ENCODE measurements at regions of chr10 and their contacts with region 1.

Region 1: DNA sequence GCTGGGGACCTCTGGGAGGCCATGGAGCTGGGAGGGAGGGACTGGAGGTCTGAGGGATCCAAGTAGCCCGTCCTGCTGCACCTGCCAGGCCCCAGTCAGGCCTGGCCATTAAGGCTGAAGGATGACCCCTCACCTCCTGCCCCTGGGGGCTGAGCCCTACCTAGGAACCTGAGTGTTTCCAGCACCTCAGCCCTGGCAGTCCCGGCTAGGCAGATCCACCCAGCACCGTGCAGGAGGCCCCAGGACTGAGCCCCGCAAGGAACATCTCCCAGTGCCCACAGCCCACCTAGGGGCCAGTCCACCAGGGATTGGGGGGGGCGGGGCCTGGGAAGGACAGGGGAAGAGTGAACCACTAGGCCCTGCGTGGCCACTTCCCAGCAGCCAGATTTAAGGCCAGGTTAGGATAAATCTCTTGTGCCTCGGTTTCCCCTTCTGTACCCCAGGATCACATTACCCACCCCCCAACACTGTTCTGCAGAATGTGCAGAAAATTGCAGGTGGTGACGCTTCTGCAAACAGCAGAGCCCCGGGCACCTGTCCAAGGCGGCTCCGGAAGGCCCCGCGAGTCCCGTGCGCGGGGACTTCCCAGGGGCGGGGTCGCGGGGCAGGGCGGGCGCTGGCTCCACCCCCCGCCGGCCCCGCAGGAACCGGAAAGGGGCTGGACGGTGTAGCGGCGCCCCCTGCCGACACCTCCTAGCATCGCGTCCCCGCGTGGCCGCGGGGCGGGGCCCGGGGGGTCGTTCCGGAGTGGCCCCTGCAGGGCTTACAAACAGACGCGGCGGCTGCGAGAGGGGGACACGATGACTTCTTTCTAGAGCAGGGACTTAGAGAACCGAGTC is 55.9 kb downstream of the PWWP2B start:
- DNase-seq: peak; percentile 95
- ATAC-seq: peak; percentile 84
- H3K4me3 ChIP-seq: peak overlapping the region; percentile 13
- H3K27ac ChIP-seq: peak overlapping the region; percentile 60
- H3K4me1 ChIP-seq: peaks cover 22% of the 10 kb centered on the region
- H3K27me3 ChIP-seq: no peaks in the 10 kb centered on the region
- CTCF ChIP-seq: peak; percentile 94

Region 2: DNA sequence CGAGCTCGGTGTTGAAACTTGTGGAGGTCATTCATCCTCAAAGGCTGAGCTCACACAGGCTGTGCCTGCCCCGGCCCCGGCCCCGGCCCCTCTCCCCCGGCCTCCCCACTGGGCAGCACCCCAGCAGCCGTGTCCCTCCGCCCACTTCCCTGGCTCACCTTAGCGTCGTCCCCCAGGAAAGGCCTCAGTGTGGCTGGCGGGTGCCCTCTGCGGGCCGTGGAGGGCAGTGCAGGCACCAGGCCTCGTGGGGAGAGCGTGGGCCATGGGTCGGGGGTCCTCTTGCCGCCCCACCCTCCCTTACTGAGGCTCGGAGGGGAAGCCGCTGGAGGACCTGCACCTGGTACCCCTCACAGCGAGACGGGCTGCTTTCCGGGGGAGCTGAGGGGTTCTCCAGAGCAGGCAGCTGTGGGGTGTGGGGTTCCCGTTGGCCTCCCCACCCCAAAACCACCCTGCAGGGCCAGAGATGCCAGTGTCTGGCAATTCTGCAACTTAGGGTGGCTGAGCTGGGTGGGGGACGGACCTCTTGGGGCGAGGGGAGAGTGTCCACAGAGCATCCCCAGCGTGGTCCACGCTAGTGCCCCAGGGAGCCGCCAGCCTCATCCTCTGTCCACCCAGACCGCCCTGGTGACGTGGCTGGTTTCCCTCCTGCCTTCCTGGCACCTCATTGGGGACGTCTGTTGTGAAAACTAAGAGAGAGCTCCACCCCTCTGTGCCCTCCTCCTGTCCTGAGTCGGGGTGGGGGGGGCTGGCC is 310.3 kb before region 1 on chr10:
- intact Hi-C with region 1: no loop called
- DNase-seq: peak; percentile 76
- ATAC-seq: peak; percentile 73
- H3K4me3 ChIP-seq: no peak overlapping the region
- H3K27ac ChIP-seq: no peak overlapping the region
- H3K4me1 ChIP-seq: no peaks in the 10 kb centered on the region
- H3K27me3 ChIP-seq: peaks cover 22% of the 10 kb centered on the region
- CTCF ChIP-seq: peak; percentile 83

Region 3: DNA sequence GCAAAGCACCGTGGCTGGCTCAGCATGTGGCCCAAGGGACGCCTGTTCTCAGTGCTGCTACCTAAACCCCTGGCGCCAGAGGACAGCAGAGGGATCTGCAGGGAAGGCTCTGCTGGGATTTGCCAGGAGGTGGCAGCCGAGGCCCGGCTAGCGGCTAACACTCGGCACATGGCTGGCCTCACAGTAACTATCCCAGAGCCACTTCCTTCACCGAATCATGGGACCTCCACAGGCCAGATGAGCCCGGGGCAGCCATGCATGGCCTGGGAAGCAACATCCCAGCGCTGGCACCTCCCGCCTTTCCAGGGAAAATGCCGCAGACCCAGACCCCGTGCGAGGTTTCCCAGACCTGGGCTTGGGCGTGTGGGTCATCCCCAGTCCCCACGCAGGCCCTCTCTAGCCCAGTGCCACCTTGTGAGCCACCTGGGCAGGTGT is 229.7 kb before region 1 on chr10:
- intact Hi-C with region 1: loop called (anchors 10 kb)
- DNase-seq: peak; percentile 88
- ATAC-seq: peak; percentile 93
- H3K4me3 ChIP-seq: no peak overlapping the region
- H3K27ac ChIP-seq: no peak overlapping the region
- H3K4me1 ChIP-seq: no peaks in the 10 kb centered on the region
- H3K27me3 ChIP-seq: no peaks in the 10 kb centered on the region
- CTCF ChIP-seq: peak; percentile 85

Region 4: DNA sequence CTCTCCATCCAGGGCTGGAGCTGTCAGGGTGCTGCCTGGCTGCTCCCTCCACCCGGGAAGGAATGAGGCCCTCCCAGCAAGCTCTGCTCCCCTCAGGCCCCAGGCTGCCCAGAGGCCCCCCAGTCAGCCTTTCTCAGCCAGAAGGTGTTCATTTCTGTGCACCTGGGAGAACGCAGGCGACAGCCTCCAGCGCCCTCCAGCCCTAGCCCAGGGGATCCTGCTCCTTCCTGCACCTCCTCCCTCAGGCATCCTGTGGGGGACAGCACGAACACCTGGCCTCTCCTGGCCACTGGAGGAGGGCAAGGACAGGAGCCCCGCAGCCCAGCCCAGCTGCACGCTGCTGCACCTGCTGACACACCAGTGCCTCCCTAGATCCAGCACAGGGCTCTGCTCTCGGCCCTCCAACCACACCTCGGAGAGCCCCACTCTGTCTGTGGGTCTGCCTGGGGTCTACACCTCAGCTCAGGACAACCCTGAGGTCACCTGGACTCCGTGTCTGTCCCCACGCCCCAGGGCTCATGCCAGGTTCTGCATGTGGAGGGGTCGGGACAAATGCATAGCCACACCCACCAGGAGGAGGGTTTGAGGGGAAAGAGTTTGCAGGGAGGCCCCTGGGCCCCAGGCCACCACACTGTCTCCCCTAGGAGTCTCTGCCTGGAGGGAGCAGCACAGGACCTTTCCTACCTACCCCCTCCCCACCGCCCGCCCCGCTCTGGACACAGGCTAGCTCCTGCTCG is 63.2 kb before region 1 on chr10:
- intact Hi-C with region 1: loop called (anchors 5 kb)
- DNase-seq: peak; percentile 66
- ATAC-seq: no peak
- H3K4me3 ChIP-seq: no peak overlapping the region
- H3K27ac ChIP-seq: no peak overlapping the region
- H3K4me1 ChIP-seq: peaks cover 10% of the 10 kb centered on the region
- H3K27me3 ChIP-seq: no peaks in the 10 kb centered on the region
- CTCF ChIP-seq: no peak

Measured in upper lobe of right lung (tissue), 1 donor.